ENCODE measurements at regions of chr18 and their contacts with region 1.

Region 1: GRCh38 chr18:54269893-54270844 is 852 bp downstream of the POLI start:
- DNase-seq: peak in 3 of 5 donors; percentile 28 to 49 (median 33)
- H3K4me3 ChIP-seq: peak overlapping the region; percentile 78
- H3K27ac ChIP-seq: peak overlapping the region; percentile 74 to 79
- H3K4me1 ChIP-seq: peaks cover 5% of the 10 kb centered on the region
- H3K27me3 ChIP-seq: no peaks in the 10 kb centered on the region
- CTCF ChIP-seq: peak; percentile 24 to 44 (median 36)
- EP300 ChIP-seq: no peak
- POLR2A ChIP-seq: no peak

Region 2: DNA sequence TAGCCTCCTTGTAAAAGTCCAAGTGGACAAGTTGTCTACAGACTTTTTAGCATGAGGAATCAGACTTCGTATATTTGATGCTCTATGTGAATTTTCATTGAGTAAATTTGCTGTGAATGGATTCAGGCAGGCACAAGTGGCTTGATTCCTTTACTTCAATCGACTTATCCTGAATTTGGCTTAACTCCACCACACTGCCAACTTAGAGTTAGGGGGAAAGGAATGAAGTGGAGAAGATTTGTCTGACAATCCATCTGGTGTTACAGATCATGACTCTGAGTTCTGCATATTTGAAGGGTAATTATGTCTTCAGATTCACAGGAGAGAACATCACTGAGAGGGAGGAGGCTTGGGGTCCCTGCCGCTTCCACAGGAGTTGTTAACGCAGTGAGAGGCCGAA is 1100.8 kb before region 1 on chr18:
- intact Hi-C with region 1: no loop called
- DNase-seq: no peak
- H3K4me3 ChIP-seq: no peak overlapping the region
- H3K27ac ChIP-seq: no peak overlapping the region
- H3K4me1 ChIP-seq: no peaks in the 10 kb centered on the region
- H3K27me3 ChIP-seq: no peaks in the 10 kb centered on the region
- CTCF ChIP-seq: no peak
- EP300 ChIP-seq: no peak
- POLR2A ChIP-seq: no peak

Region 3: GRCh38 chr18:54119524-54120019 is 150.6 kb before region 1 on chr18:
- intact Hi-C with region 1: loop called in 1 of 4 experiments (anchors 10 kb)
- DNase-seq: no peak
- H3K4me3 ChIP-seq: no peak overlapping the region
- H3K27ac ChIP-seq: no peak overlapping the region
- H3K4me1 ChIP-seq: peaks cover 2% of the 10 kb centered on the region
- H3K27me3 ChIP-seq: no peaks in the 10 kb centered on the region
- CTCF ChIP-seq: peak in 2 of 3 donors; percentile 20 to 25
- EP300 ChIP-seq: no peak
- POLR2A ChIP-seq: no peak

Region 4: GRCh38 chr18:54224379-54225014 is 45.7 kb before region 1 on chr18 and contains the start of gene MBD2:
- intact Hi-C with region 1: loop called in 2 of 4 experiments (anchors 5 kb)
- DNase-seq: peak; percentile 91 to 96 (median 93)
- H3K4me3 ChIP-seq: peak within 1 kb of the TSS; percentile 66
- H3K27ac ChIP-seq: no peak within 1 kb of the TSS
- H3K4me1 ChIP-seq: peaks cover 5% of the 10 kb centered on the region
- H3K27me3 ChIP-seq: no peaks in the 10 kb centered on the region
- CTCF ChIP-seq: no peak
- EP300 ChIP-seq: no peak
- POLR2A ChIP-seq: peak; percentile 36
- total RNA-seq, gene MBD2: 21.9 to 59.0 (median 45.0) TPM

Region 5: DNA sequence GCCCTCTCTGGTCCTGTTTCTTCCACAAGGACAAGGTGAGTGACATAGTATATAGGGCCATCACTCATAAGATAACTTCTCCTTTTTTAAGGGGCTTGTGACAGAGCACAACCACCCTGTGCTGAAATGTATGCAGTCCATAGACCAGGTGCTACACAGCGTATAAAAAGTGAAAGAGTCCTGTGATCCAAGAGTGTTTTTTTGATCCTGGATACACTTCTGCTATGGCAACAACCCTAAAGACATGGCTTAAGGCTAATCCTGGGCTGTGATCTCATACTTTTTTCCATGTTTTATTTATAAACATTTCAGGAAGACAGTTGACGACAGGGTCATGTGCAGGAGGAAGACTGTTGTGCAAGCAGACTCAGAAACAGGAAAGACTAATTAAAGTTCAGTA is 1718.4 kb after region 1 on chr18:
- intact Hi-C with region 1: no loop called
- DNase-seq: no peak
- H3K4me3 ChIP-seq: no peak overlapping the region
- H3K27ac ChIP-seq: no peak overlapping the region
- H3K4me1 ChIP-seq: no peaks in the 10 kb centered on the region
- H3K27me3 ChIP-seq: no peaks in the 10 kb centered on the region
- CTCF ChIP-seq: no peak
- EP300 ChIP-seq: no peak
- POLR2A ChIP-seq: no peak

Measured in ovary (tissue), 10 donors.